ENCODE measurements at regions of chr1 and their contacts with region 1.

Region 1: GRCh38 chr1:160251687-160252526 is 10.4 kb downstream of the DCAF8 start:
- DNase-seq: peak; percentile 31
- ATAC-seq: peak; percentile 98
- H3K4me3 ChIP-seq: no peak overlapping the region
- H3K27ac ChIP-seq: no peak overlapping the region; the same call in 1 of the 2 replicates
- H3K4me1 ChIP-seq: no peaks in the 10 kb centered on the region
- H3K27me3 ChIP-seq: no peaks in the 10 kb centered on the region
- CTCF ChIP-seq: peak; percentile 73 to 88 (median 73); a peak in 5 of 6 replicates
- EP300 ChIP-seq: no peak
- POLR2A ChIP-seq: no peak
- RAD21 ChIP-seq: peak; percentile 90

Region 2: GRCh38 chr1:160046494-160047110 is 205.3 kb before region 1 on chr1:
- CTCF ChIA-PET with region 1: interaction called, 18 read pairs
- POLR2A ChIA-PET with region 1: no interaction called
- RAD21 ChIA-PET with region 1: interaction called, 3 read pairs
- SMC1A ChIA-PET with region 1: interaction called, 7 read pairs
- in situ Hi-C with region 1: no loop called
- intact Hi-C with region 1: no loop called
- DNase-seq: no peak
- ATAC-seq: peak; percentile 96
- H3K4me3 ChIP-seq: 0 out of 2 replicates have a peak overlapping the region, but pooled peaks have one; percentile 16
- H3K27ac ChIP-seq: no peak overlapping the region
- H3K4me1 ChIP-seq: peaks cover 11% of the 10 kb centered on the region
- H3K27me3 ChIP-seq: no peaks in the 10 kb centered on the region; a peak in 3 of 4 replicates
- CTCF ChIP-seq: peak; percentile 54 to 65 (median 61)
- EP300 ChIP-seq: no peak
- POLR2A ChIP-seq: no peak
- RAD21 ChIP-seq: peak; percentile 78

Region 3: GRCh38 chr1:160058087-160058486 is 193.8 kb before region 1 on chr1:
- CTCF ChIA-PET with region 1: no interaction called
- POLR2A ChIA-PET with region 1: no interaction called
- RAD21 ChIA-PET with region 1: no interaction called
- SMC1A ChIA-PET with region 1: no interaction called
- in situ Hi-C with region 1: no loop called
- intact Hi-C with region 1: no loop called
- DNase-seq: no peak
- ATAC-seq: no peak
- H3K4me3 ChIP-seq: no peak overlapping the region
- H3K27ac ChIP-seq: no peak overlapping the region
- H3K4me1 ChIP-seq: no peaks in the 10 kb centered on the region
- H3K27me3 ChIP-seq: peaks cover 2 to 9% of the 10 kb centered on the region in 2 experiments
- CTCF ChIP-seq: peak; percentile 8 to 27 (median 21); a peak in 2 of 6 replicates
- EP300 ChIP-seq: no peak
- POLR2A ChIP-seq: no peak
- RAD21 ChIP-seq: 0 out of 2 replicates have a peak, but pooled peaks have one; percentile 3

Region 4: GRCh38 chr1:160108888-160109662 is 142.8 kb before region 1 on chr1:
- CTCF ChIA-PET with region 1: interaction called, 189 read pairs
- POLR2A ChIA-PET with region 1: no interaction called
- RAD21 ChIA-PET with region 1: interaction called, 85 read pairs
- SMC1A ChIA-PET with region 1: interaction called, 57 read pairs
- in situ Hi-C with region 1: no loop called
- intact Hi-C with region 1: loop called (anchors 2 kb)
- DNase-seq: no peak
- ATAC-seq: peak; percentile 70
- H3K4me3 ChIP-seq: no peak overlapping the region
- H3K27ac ChIP-seq: no peak overlapping the region
- H3K4me1 ChIP-seq: no peaks in the 10 kb centered on the region
- H3K27me3 ChIP-seq: no peaks in the 10 kb centered on the region; a peak in 1 of 4 replicates
- CTCF ChIP-seq: peak; percentile 38 to 72 (median 58)
- EP300 ChIP-seq: no peak
- POLR2A ChIP-seq: no peak
- RAD21 ChIP-seq: no peak; the same call in 1 of the 2 replicates

Region 5: GRCh38 chr1:160193091-160193819 is 58.7 kb before region 1 on chr1:
- CTCF ChIA-PET with region 1: interaction called, 273 read pairs
- POLR2A ChIA-PET with region 1: interaction called, 6 read pairs
- RAD21 ChIA-PET with region 1: interaction called, 128 read pairs
- SMC1A ChIA-PET with region 1: interaction called, 123 read pairs
- in situ Hi-C with region 1: loop called (anchors 5 kb)
- intact Hi-C with region 1: loop called (anchors 1 kb)
- DNase-seq: peak; percentile 48
- ATAC-seq: peak; percentile 86
- H3K4me3 ChIP-seq: no peak overlapping the region
- H3K27ac ChIP-seq: no peak overlapping the region
- H3K4me1 ChIP-seq: peaks cover 21% of the 10 kb centered on the region
- H3K27me3 ChIP-seq: peaks cover 0 to 3% of the 10 kb centered on the region in 2 experiments; a peak in 1 of 4 replicates
- CTCF ChIP-seq: peak; percentile 95 to 99 (median 97); a peak in 5 of 6 replicates
- EP300 ChIP-seq: no peak
- POLR2A ChIP-seq: no peak
- RAD21 ChIP-seq: peak; percentile 100

Region 6: GRCh38 chr1:160226623-160227022 is 25.3 kb before region 1 on chr1:
- CTCF ChIA-PET with region 1: interaction called, 40 read pairs
- POLR2A ChIA-PET with region 1: interaction called, 4 read pairs
- RAD21 ChIA-PET with region 1: interaction called, 5 read pairs
- SMC1A ChIA-PET with region 1: interaction called, 28 read pairs
- in situ Hi-C with region 1: no loop called
- intact Hi-C with region 1: no loop called
- DNase-seq: no peak
- ATAC-seq: peak; percentile 47
- H3K4me3 ChIP-seq: no peak overlapping the region
- H3K27ac ChIP-seq: no peak overlapping the region
- H3K4me1 ChIP-seq: no peaks in the 10 kb centered on the region; the same call in 1 of the 2 replicates
- H3K27me3 ChIP-seq: no peaks in the 10 kb centered on the region
- CTCF ChIP-seq: no peak
- EP300 ChIP-seq: no peak
- POLR2A ChIP-seq: no peak
- RAD21 ChIP-seq: no peak

Region 7: DNA sequence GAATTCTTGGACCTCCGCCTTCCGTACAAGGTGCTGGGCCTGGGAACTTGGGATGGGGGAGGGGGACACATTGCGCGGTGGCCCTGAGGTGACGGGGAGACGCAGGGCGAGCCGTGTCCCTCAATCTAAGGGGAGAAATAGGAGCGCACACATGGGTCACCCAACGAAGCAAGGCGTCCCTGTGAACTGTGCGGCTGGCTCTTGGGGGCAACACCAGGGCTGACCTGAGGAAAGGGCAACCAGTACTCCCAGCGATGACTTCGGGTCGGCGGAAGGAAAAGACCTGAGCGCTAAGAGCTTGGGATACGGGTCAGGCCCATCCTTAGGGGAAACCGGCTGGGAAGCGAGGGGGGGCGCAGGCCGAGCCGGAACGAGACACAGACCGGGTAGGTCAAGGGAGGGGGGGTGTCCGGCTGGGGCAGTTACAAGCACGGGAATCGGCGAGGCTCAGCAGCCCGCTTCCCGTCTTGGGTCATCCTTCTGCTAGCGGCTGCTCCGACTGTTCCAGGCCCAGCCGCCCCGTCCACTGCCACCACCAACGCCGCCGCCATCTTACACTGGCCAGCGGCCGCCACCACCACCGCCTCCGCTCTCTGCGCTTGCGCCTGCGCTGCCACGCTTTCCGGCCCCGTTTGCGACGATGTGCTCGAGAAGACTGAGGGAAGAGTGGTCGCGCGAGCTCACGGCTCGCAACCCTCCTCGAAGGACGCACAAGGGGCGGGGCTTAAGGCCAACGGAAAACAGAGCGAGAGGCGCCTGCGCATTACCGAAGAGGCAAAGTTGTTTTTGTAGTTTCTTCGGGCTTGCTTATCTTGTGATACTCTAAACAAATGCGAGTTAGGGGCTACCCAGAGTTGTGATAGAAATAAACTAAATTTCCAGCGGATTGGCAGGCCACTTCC is 10.2 kb after region 1 on chr1 and contains the start of gene DCAF8:
- CTCF ChIA-PET with region 1: interaction called, 86 read pairs
- POLR2A ChIA-PET with region 1: interaction called, 22 read pairs
- RAD21 ChIA-PET with region 1: interaction called, 68 read pairs
- SMC1A ChIA-PET with region 1: interaction called, 47 read pairs
- in situ Hi-C with region 1: no loop called
- intact Hi-C with region 1: no loop called
- DNase-seq: peak; percentile 94
- ATAC-seq: peak; percentile 89
- H3K4me3 ChIP-seq: peak within 1 kb of the TSS; percentile 82
- H3K27ac ChIP-seq: peak within 1 kb of the TSS; percentile 90
- H3K4me1 ChIP-seq: peaks cover 3% of the 10 kb centered on the region
- H3K27me3 ChIP-seq: no peaks in the 10 kb centered on the region
- CTCF ChIP-seq: no peak
- EP300 ChIP-seq: no peak
- POLR2A ChIP-seq: peak; percentile 98
- RAD21 ChIP-seq: no peak
- polyA plus RNA-seq, gene DCAF8: 10.4 to 18.7 TPM

Region 8: DNA sequence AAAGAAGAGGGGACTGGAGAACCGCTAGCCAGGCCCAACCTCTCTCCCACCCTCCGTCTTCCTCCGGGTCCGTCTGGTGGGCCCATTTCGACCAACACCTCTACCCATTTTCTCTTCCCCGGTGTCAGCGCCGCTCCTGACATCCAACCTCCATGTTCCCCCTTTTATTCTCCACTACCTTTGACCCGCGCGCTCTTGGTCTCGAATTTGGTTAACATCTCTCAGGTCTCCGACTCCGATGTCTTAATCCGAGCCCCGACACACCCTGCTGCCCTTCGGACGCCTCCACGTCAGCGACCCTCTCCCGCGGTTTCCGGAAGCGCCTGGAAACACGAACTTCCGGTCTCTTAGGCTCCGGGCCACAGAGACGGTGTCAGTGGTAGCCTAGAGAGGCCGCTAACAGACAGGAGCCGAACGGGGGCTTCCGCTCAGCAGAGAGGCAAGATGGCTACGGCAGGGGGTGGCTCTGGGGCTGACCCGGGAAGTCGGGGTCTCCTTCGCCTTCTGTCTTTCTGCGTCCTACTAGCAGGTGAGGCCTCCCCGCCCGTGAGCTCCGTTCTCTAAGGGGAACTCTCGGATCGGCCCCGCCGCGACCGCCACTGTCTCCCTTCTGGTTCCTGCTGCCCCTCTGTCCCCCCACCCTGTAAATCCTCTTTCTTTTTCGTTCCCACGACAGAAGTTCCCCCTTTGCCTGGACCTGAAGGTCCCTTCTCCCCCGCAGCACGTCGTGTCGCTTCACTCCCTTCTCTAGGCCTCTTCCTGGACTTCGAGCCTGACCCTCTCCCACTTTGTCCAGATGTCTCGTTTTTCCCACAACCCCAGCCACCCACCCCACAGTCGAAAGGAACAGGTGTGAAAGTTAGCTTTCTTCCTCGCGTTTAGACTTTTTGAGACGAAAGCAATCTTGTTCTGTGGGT is 91.3 kb after region 1 on chr1 and contains the starts of genes COPA and NCSTN:
- CTCF ChIA-PET with region 1: interaction called, 10 read pairs
- POLR2A ChIA-PET with region 1: interaction called, 5 read pairs
- RAD21 ChIA-PET with region 1: no interaction called
- SMC1A ChIA-PET with region 1: interaction called, 6 read pairs
- in situ Hi-C with region 1: no loop called
- intact Hi-C with region 1: no loop called
- DNase-seq: peak; percentile 75
- ATAC-seq: peak; percentile 90
- H3K4me3 ChIP-seq: peak within 1 kb of the TSS; percentile 96
- H3K27ac ChIP-seq: peak within 1 kb of the TSS; percentile 97
- H3K4me1 ChIP-seq: peaks cover 23% of the 10 kb centered on the region
- H3K27me3 ChIP-seq: no peaks in the 10 kb centered on the region
- CTCF ChIP-seq: no peak
- EP300 ChIP-seq: no peak
- POLR2A ChIP-seq: peak; percentile 96
- RAD21 ChIP-seq: no peak
- polyA plus RNA-seq, gene COPA: 53.7 to 70.6 TPM
- polyA plus RNA-seq, gene NCSTN: 33.3 to 41.6 TPM

Region 9: GRCh38 chr1:160486453-160486852 is 234.5 kb after region 1 on chr1:
- CTCF ChIA-PET with region 1: no interaction called
- POLR2A ChIA-PET with region 1: no interaction called
- RAD21 ChIA-PET with region 1: no interaction called
- SMC1A ChIA-PET with region 1: no interaction called
- in situ Hi-C with region 1: no loop called
- intact Hi-C with region 1: no loop called
- DNase-seq: no peak
- ATAC-seq: no peak
- H3K4me3 ChIP-seq: no peak overlapping the region
- H3K27ac ChIP-seq: no peak overlapping the region
- H3K4me1 ChIP-seq: peaks cover 17% of the 10 kb centered on the region
- H3K27me3 ChIP-seq: no peaks in the 10 kb centered on the region
- CTCF ChIP-seq: no peak
- EP300 ChIP-seq: no peak
- POLR2A ChIP-seq: no peak
- RAD21 ChIP-seq: no peak